GM12878 (cell line): ENCODE measurements at regions of chr3 and their contacts with region 1.

Region 1: GRCh38 chr3:171666516-171666915 is 143.8 kb downstream of the PLD1 start:
- DNase-seq: no peak
- ATAC-seq: no peak
- H3K4me3 ChIP-seq: no peak overlapping the region
- H3K27ac ChIP-seq: no peak overlapping the region
- H3K4me1 ChIP-seq: no peaks in the 10 kb centered on the region
- H3K27me3 ChIP-seq: no peaks in the 10 kb centered on the region
- CTCF ChIP-seq: no peak
- EP300 ChIP-seq: no peak
- POLR2A ChIP-seq: no peak
- RAD21 ChIP-seq: no peak

Region 2: DNA sequence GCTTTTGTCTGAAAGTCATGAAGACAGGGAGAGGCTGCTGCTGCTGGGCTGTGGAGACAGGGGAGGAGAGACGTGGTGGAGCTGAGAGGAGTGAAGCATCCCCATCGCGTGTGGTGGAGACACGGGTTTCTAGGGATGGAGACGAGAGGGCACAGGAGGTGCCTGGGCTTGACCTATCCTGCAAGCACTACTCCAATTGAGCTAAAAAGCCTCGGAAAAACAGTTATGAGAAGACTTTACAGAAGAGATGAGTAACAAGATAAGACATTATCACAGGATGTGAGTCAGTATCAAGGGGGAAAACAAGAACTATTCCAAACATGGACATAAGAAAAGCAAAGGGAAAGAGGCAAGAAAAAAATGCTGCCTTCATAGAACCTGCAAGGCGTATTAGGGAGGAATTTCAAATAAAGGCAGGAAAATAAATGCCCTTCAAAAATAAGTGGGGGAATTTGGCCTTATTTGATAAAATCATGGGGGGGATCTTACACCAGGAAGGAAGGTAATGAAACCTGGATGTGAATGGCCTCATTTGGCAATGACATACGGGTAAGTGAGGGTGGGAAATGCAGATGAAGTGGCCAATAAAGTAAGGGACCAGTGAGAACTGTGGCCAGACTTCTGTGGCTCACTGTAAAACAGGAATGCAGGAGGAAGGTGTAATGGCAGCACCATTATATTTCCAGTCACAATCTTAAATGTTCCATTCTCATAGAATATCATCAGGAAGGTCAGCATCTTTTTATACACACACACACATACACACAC is 45.8 kb after region 1 on chr3:
- CTCF ChIA-PET with region 1: no interaction called
- POLR2A ChIA-PET with region 1: no interaction called
- RAD21 ChIA-PET with region 1: no interaction called
- SMC1A ChIA-PET with region 1: no interaction called
- in situ Hi-C with region 1: no loop called
- intact Hi-C with region 1: loop called (anchors 2 kb)
- DNase-seq: no peak
- ATAC-seq: no peak
- H3K4me3 ChIP-seq: no peak overlapping the region
- H3K27ac ChIP-seq: no peak overlapping the region
- H3K4me1 ChIP-seq: no peaks in the 10 kb centered on the region
- H3K27me3 ChIP-seq: no peaks in the 10 kb centered on the region
- CTCF ChIP-seq: no peak
- EP300 ChIP-seq: no peak
- POLR2A ChIP-seq: no peak
- RAD21 ChIP-seq: no peak

Region 3: DNA sequence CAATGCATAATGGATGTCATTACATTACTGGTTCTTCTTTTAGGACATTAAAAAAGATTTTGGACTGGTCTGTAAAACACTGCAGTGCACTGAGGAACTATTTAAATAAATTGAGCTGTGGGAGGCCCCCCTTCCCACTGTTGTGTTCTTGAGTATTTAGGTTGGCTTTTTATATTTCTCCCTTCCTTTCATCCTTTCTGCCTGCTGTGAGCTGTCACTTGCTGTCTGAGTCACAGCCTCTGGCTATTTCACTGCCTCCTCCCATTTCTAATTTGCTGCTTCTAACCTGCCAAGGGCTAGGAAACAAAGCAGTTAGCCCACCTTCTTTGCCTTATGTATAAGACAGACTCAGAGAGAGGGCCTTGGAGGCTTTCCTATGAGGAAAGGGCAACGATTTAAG is 283.9 kb after region 1 on chr3:
- CTCF ChIA-PET with region 1: no interaction called
- POLR2A ChIA-PET with region 1: no interaction called
- RAD21 ChIA-PET with region 1: no interaction called
- SMC1A ChIA-PET with region 1: no interaction called
- in situ Hi-C with region 1: no loop called
- intact Hi-C with region 1: no loop called
- DNase-seq: no peak
- ATAC-seq: no peak; the same call in 2 of the 3 replicates
- H3K4me3 ChIP-seq: no peak overlapping the region
- H3K27ac ChIP-seq: no peak overlapping the region
- H3K4me1 ChIP-seq: no peaks in the 10 kb centered on the region
- H3K27me3 ChIP-seq: no peaks in the 10 kb centered on the region
- CTCF ChIP-seq: no peak
- EP300 ChIP-seq: no peak
- POLR2A ChIP-seq: no peak
- RAD21 ChIP-seq: no peak

Region 4: DNA sequence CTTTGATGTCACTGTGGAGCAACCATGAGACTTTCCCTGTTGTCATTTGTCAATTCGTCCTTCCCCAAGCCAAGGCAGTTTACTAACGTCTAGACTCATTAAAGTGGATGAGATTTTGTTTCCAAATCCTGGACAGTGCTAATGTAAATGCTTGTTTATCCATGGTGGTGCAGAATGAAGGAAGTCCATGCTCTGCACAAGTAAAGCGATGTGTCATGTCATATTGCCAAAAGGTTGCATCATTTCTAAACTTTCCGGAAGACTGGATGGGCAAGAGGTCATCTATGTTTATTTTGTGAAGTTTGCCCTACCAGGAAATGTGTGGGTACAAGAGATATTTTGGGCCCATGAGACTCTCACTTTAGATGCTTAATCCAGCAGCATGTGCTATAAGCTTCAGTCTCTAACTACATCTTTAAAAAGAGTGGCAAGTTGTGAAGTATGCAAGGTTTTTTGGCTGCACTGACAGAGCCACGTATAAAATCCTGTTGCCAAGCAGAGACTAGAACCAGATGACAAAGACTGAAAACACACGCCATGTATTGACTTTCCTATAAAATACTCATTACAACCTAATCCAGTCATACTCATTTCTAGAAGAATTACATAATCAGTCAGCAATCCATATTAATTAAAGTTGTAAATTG is 300.7 kb after region 1 on chr3:
- CTCF ChIA-PET with region 1: no interaction called
- POLR2A ChIA-PET with region 1: no interaction called
- RAD21 ChIA-PET with region 1: no interaction called
- SMC1A ChIA-PET with region 1: no interaction called
- in situ Hi-C with region 1: no loop called
- intact Hi-C with region 1: no loop called
- DNase-seq: no peak
- ATAC-seq: peak; percentile 26; the same call in 2 of the 3 replicates
- H3K4me3 ChIP-seq: no peak overlapping the region
- H3K27ac ChIP-seq: no peak overlapping the region
- H3K4me1 ChIP-seq: no peaks in the 10 kb centered on the region
- H3K27me3 ChIP-seq: no peaks in the 10 kb centered on the region
- CTCF ChIP-seq: no peak
- EP300 ChIP-seq: no peak
- POLR2A ChIP-seq: no peak
- RAD21 ChIP-seq: no peak